ENCODE measurements at regions of chr2 and their contacts with region 1.

Region 1: DNA sequence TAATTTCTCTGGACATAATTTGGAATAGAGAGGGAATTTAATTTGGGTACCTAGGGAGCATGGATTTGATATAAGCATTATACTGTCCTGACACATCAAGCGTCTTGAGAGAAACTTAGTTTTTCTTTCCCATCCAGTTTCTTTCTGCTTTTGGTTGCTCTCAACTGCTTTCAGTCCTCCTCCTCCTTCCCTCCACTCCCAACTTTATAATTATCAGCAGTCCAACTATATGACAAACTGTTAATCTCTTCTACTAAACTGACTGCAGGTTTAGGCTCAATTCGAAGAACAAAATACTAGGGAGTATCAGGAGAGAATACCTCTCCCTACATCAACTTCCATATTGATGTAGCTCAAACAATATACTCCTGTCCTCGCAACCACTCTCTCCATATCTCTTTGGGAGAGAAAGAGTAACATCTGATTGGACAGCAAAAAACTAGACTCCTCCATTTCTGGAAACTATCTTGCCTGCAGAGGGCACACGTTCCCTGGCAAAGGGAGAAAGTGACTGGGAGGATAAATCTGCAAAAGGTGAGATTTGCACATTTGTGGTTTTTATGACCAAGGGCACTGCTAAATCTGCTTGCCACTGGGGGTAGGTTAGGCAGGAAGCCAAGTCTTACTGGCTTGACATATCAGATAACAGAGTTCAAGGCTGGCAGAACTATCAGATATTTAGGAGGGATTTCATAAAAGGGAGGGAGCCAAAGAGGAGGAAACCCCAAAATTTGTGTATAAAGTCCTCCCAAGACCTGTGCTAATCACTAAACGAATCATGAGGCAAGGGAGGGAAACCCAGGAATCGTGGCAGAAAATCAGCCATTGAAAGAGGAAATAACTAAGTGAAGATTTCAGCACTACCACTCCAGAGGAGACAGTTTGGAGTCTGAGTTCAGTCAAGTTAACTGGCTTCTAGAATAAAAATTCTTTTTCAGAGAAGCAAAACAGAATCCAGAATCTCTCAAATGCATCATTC is 40.0 kb downstream of the ICA1L start:
- DNase-seq: no peak
- H3K4me3 ChIP-seq: no peak overlapping the region
- CTCF ChIP-seq: peak; percentile 63

Region 2: GRCh38 chr2:202815548-202816360 is 15.8 kb before region 1 on chr2:
- CTCF ChIA-PET with region 1: interaction called, 13 read pairs
- POLR2A ChIA-PET with region 1: no interaction called
- DNase-seq: no peak
- H3K4me3 ChIP-seq: no peak overlapping the region
- CTCF ChIP-seq: no peak

Region 3: DNA sequence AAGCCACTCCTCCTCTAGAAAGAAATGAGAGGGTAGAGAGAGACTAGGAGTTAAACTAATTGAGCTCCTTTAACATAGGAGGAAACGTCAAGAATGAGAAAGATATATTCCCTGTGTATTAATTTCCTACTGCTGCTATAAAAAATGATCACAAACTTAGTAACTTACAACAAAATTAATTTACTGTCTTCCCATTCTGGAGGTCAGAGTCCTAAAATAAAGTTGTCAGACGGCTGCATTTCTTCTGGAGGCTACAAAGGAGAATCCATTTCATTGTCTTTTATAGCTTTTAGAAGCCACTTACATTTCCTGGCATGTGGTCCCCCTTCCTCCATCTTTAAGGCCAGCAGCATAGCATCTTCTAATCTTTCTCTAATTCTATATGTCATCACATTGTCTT is 13.1 kb after region 1 on chr2:
- CTCF ChIA-PET with region 1: interaction called, 10 read pairs
- POLR2A ChIA-PET with region 1: no interaction called
- DNase-seq: no peak
- H3K4me3 ChIP-seq: no peak overlapping the region
- CTCF ChIP-seq: no peak

Region 4: DNA sequence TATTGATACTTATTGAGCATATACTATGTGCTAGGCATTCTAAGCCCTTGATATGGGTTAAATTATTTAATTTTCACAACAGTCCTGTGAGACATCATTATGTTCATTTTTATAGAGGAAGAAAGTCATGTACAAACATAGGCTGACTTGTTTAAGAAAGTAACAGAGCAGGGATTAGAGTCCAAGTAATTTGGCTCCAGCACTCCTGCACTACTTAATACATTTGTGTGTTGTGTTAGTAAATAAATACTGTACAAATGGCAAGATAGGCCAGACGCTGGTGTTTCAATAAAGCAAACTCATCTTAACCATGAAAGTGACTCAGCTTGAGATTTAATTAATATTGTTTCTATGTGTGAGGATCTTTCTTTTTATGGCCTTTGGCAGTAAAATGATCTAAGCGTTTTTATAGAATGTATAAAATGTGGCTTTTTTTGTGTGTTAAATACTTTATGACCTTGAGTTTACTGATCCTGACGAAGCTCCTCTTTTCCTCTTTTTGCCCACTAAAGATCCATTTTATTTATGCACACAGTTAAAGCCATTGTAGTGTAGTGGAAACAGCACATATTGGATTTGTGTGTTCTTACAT is 204.4 kb after region 1 on chr2:
- CTCF ChIA-PET with region 1: no interaction called
- POLR2A ChIA-PET with region 1: no interaction called
- DNase-seq: no peak
- H3K4me3 ChIP-seq: no peak overlapping the region
- CTCF ChIP-seq: no peak